ENCODE measurements at regions of chr3 and their contacts with region 1.

Region 1: GRCh38 chr3:160449636-160450598 is at the start of gene TRIM59:
- DNase-seq: peak; percentile 98
- H3K4me3 ChIP-seq: peak within 1 kb of the TSS; percentile 86
- H3K27ac ChIP-seq: peak within 1 kb of the TSS; percentile 88
- H3K4me1 ChIP-seq: peaks cover 21% of the 10 kb centered on the region
- CTCF ChIP-seq: no peak
- total RNA-seq, gene TRIM59: 26.1 and 28.7 TPM in 2 replicates

Region 2: DNA sequence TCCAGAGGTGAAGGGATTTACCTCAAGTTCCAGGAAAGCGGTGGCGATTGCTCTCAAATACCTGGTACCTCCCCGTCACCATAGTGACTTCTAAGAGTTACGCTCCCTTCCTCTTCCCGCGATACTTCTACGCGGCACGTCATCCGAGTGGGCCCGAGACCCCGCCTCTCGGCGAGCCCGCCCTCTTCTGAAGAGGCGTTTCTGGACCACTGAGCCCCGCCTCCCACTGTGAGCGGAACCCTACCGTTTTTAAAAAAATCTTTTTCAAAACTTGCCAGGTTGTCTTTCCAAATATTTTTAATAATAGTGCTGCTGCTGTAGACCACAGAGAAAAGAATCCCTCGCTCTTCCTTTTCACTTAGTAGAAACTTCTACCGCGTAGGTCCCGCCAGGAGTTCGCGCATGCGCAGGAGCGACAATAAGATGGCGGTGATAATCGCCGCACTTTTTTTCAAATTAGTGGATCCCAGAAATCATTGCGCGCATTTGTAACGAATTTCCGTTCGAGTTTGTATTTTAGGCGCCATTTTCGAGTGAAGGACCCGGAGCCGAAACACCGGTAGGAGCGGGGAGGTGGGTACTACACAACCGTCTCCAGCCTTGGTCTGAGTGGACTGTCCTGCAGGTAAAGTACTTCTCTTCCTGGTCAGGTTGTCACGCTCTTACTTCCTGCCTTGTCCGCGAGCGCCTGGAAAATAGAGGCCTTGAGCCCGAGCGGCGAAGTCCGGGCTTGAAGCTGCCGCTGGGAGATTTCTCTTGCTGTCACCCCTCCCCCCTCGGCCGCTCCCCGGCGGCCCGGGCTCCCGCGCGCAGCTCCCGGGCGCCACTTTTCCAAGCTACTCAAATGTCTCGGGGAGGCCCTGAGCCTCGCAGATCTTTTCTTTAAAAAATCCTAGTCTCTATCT is 50.5 kb before region 1 on chr3 and contains the starts of genes IFT80 and SMC4:
- CTCF ChIA-PET with region 1: no interaction called
- POLR2A ChIA-PET with region 1: interaction called, 11 read pairs
- intact Hi-C with region 1: loop called (anchors 1 kb)
- DNase-seq: peak; percentile 96
- H3K4me3 ChIP-seq: peak within 1 kb of the TSS; percentile 100
- H3K27ac ChIP-seq: peak within 1 kb of the TSS; percentile 92
- H3K4me1 ChIP-seq: peaks cover 43% of the 10 kb centered on the region
- CTCF ChIP-seq: no peak
- total RNA-seq, gene IFT80: 33.5 and 37.3 TPM in 2 replicates
- total RNA-seq, gene SMC4: 316 and 348 TPM in 2 replicates

Region 3: DNA sequence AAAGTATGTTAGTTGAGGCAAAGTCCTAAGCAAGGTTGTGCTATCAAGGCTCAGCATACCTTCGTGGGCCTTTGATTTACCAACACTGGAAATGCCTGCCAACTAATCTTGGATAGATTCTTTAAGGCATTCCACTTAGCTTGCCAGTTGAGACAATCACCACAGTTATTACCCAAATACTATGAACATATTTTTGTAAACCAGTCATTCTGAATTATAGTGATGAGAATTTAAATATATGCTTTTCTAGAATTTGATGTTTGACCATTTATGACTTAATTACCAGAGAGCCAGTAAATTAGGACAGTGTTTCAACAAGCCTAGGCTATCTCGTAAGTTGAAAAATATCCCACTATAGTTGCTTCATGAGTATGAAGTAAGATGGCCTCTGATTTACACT is 15.8 kb before region 1 on chr3:
- CTCF ChIA-PET with region 1: no interaction called
- POLR2A ChIA-PET with region 1: interaction called, 22 read pairs
- intact Hi-C with region 1: no loop called
- DNase-seq: no peak
- H3K4me3 ChIP-seq: no peak overlapping the region
- H3K27ac ChIP-seq: no peak overlapping the region
- H3K4me1 ChIP-seq: peaks cover 13% of the 10 kb centered on the region
- CTCF ChIP-seq: no peak

Region 4: GRCh38 chr3:160460033-160460432 is 10.1 kb after region 1 on chr3:
- CTCF ChIA-PET with region 1: no interaction called
- POLR2A ChIA-PET with region 1: interaction called, 14 read pairs
- intact Hi-C with region 1: no loop called
- DNase-seq: no peak
- H3K4me3 ChIP-seq: no peak overlapping the region
- H3K27ac ChIP-seq: no peak overlapping the region
- H3K4me1 ChIP-seq: no peaks in the 10 kb centered on the region
- CTCF ChIP-seq: no peak

Region 5: GRCh38 chr3:160754855-160755747 is 305.2 kb after region 1 on chr3:
- CTCF ChIA-PET with region 1: no interaction called
- POLR2A ChIA-PET with region 1: interaction called, 6 read pairs
- intact Hi-C with region 1: loop called (anchors 2 kb)
- DNase-seq: peak; percentile 95
- H3K4me3 ChIP-seq: peak overlapping the region; percentile 84
- H3K27ac ChIP-seq: peak overlapping the region; percentile 69
- H3K4me1 ChIP-seq: peaks cover 26% of the 10 kb centered on the region
- CTCF ChIP-seq: no peak